Endothelial cell of umbilical vein (primary cell): ENCODE measurements at regions of chr4 and their contacts with region 1.

Region 1: DNA sequence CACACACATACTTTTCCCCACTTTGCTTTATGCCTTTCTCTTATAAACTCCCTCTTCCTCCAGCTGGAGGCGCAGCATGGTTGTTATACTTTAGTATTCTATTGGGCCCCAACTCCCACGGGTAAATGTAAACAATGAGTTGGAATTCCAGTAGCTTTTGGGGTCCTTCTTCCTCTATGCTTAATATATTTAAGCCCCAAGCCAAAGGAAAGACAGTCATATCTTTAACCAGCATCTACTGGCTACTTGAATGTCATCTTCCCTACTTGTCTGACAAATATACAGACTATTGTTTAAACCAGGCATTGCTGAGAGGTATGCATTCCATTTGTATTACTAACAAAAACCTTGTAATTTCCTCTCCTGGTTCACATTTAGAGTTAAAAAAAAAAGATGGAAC is 72.9 kb downstream of the WDR19 start:
- DNase-seq: peak; percentile 92
- H3K4me3 ChIP-seq: peak overlapping the region in 1 of 3 experiments; percentile 12
- H3K27ac ChIP-seq: peak overlapping the region; percentile 91
- H3K4me1 ChIP-seq: peaks cover 32% of the 10 kb centered on the region
- H3K27me3 ChIP-seq: no peaks in the 10 kb centered on the region
- CTCF ChIP-seq: peak; percentile 35 to 37
- POLR2A ChIP-seq: no peak

Region 2: GRCh38 chr4:39044364-39044955 is 210.8 kb before region 1 on chr4:
- CTCF ChIA-PET with region 1: no interaction called
- POLR2A ChIA-PET with region 1: no interaction called
- dilution Hi-C with region 1: no loop called
- intact Hi-C with region 1: loop called (anchors 5 kb)
- DNase-seq: peak; percentile 94
- H3K4me3 ChIP-seq: peak overlapping the region; percentile 60 to 98 (median 95)
- H3K27ac ChIP-seq: peak overlapping the region; percentile 92
- H3K4me1 ChIP-seq: peaks cover 25% of the 10 kb centered on the region
- H3K27me3 ChIP-seq: no peaks in the 10 kb centered on the region
- CTCF ChIP-seq: no peak
- POLR2A ChIP-seq: peak; percentile 81

Region 3: DNA sequence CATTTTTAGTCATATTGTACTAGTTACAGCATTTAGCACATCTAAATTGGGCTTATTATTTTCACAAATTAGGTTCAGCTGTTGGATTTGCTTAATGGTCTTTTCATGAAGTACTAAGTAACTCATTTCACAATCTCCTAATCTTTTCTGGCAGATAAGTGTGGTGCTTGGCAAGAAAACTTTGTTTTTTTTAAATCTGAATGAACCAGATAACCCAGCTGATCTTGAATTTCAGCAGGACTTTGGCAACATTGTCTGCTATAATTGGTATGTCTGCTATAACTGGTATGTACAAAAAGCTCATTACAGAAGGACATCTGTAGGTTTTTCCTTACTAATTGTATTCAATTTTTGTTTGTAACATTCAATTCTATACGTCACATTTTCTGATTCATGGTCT is 50.3 kb before region 1 on chr4:
- CTCF ChIA-PET with region 1: no interaction called
- POLR2A ChIA-PET with region 1: no interaction called
- dilution Hi-C with region 1: no loop called
- intact Hi-C with region 1: no loop called
- DNase-seq: peak; percentile 17
- H3K4me3 ChIP-seq: no peak overlapping the region
- H3K27ac ChIP-seq: no peak overlapping the region
- H3K4me1 ChIP-seq: no peaks in the 10 kb centered on the region
- H3K27me3 ChIP-seq: no peaks in the 10 kb centered on the region
- CTCF ChIP-seq: no peak
- POLR2A ChIP-seq: no peak

Region 4: GRCh38 chr4:39285111-39285795 is 30.0 kb after region 1 on chr4:
- CTCF ChIA-PET with region 1: interaction called, 3 read pairs
- POLR2A ChIA-PET with region 1: no interaction called
- dilution Hi-C with region 1: no loop called
- intact Hi-C with region 1: loop called (anchors 1 kb)
- DNase-seq: peak; percentile 91
- H3K4me3 ChIP-seq: no peak overlapping the region
- H3K27ac ChIP-seq: peak overlapping the region; percentile 32
- H3K4me1 ChIP-seq: peaks cover 7% of the 10 kb centered on the region
- H3K27me3 ChIP-seq: no peaks in the 10 kb centered on the region
- CTCF ChIP-seq: no peak
- POLR2A ChIP-seq: no peak

Region 5: GRCh38 chr4:39353478-39354253 is 98.4 kb after region 1 on chr4:
- CTCF ChIA-PET with region 1: no interaction called
- POLR2A ChIA-PET with region 1: no interaction called
- dilution Hi-C with region 1: no loop called
- intact Hi-C with region 1: loop called (anchors 5 kb)
- DNase-seq: peak; percentile 83
- H3K4me3 ChIP-seq: peak overlapping the region; percentile 19 to 73 (median 27)
- H3K27ac ChIP-seq: peak overlapping the region; percentile 92
- H3K4me1 ChIP-seq: peaks cover 11% of the 10 kb centered on the region
- H3K27me3 ChIP-seq: no peaks in the 10 kb centered on the region
- CTCF ChIP-seq: no peak
- POLR2A ChIP-seq: peak; percentile 76

Region 6: DNA sequence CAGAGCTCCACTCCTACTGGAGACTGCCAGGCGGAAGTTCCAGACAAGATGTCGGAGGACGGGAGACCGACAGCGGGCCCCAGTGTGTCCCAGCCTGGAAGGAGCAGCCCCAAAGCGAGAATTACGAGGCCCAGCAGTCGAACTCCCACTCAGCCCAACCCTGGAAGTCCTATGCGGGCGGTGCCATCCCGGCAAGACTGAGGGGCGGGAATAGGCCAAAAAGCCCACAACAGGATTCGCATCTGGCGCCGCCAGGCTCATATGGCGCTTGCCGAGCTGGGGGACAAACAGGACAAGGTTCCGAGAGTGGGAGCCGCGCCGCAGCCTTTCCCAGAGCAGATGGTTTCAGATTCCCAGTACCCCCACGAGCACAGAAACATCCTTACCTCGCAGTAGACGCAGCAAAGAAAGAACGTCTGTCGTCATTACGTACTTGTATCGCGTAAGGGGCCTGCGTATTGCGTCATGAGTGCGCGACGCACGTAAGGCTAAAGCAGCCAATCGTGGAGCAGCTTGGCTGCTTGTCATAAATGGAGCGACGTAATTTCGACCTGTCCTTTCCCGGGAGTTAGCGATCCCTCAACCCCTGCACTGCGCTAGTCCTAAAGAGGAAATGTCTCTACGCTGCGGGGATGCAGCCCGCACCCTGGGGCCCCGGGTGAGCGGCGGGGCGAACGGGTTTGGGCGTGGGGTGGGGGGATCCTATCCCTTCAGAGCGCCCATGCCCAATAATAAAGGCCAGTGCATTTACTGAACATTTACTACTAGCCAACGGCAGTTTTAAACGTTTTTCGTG is 203.4 kb after region 1 on chr4 and contains the starts of genes LIAS and RPL9:
- CTCF ChIA-PET with region 1: interaction called, 3 read pairs
- POLR2A ChIA-PET with region 1: interaction called, 3 read pairs
- dilution Hi-C with region 1: no loop called
- intact Hi-C with region 1: loop called (anchors 1 kb)
- DNase-seq: peak; percentile 99
- H3K4me3 ChIP-seq: peak within 1 kb of the TSS; percentile 55 to 99 (median 93)
- H3K27ac ChIP-seq: peak within 1 kb of the TSS; percentile 83
- H3K4me1 ChIP-seq: peaks cover 26% of the 10 kb centered on the region
- H3K27me3 ChIP-seq: no peaks in the 10 kb centered on the region
- CTCF ChIP-seq: no peak
- POLR2A ChIP-seq: peak; percentile 98
- total RNA-seq, gene LIAS: 9.7 and 11.3 TPM in 2 replicates
- total RNA-seq, gene RPL9: 963 and 988 TPM in 2 replicates